Activated CD4-positive, alpha-beta memory T cell treated with anti-CD3 and anti-CD28 coated beads, Interleukin-2, amount 10 ng/mL, durations not matched to agents 7 days and 5 days (primary cell): ENCODE measurements at regions of chr7 and their contacts with region 1.

Region 1: DNA sequence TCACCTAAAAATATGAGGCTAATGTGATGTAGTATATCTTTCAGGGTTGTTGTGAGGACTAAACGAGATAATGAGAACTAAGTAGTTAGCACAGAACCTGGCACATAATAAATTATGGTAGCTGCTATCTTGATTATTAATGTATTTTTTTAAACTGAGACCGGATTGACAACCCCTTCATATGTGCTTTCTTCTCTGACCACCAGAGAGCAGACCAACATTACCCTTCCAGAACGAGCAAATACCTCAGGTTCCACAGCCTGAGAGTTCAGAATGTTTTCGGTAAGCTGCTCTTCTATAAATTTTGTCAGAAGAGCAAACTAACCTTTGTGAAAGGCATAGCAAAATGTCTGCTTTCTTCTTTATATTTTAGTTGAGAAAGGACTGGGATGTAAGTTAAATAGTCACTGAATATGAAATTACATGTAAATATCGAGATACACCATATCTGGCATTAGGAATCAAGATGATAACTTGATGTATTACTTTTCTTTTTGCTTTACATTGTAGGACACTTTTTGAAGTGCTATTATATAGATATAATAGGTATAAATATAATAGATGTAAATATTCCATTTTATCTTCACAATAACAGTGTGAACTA is 13.6 kb upstream of the BPGM start:
- DNase-seq: peak; percentile 31
- H3K4me3 Mint-ChIP-seq: no peak overlapping the region
- H3K27ac Mint-ChIP-seq: no peak overlapping the region
- H3K4me1 Mint-ChIP-seq: peaks cover 34% of the 10 kb centered on the region
- H3K27me3 Mint-ChIP-seq: peaks cover 15% of the 10 kb centered on the region

Region 2: GRCh38 chr7:134619627-134620331 is 13.3 kb before region 1 on chr7:
- CTCF ChIA-PET with region 1: no interaction called
- POLR2A ChIA-PET with region 1: no interaction called
- DNase-seq: no peak
- H3K4me3 Mint-ChIP-seq: no peak overlapping the region
- H3K27ac Mint-ChIP-seq: no peak overlapping the region
- H3K4me1 Mint-ChIP-seq: peaks cover 2% of the 10 kb centered on the region
- H3K27me3 Mint-ChIP-seq: peaks cover 52% of the 10 kb centered on the region

Region 3: GRCh38 chr7:134690016-134690415 is 57.0 kb after region 1 on chr7:
- CTCF ChIA-PET with region 1: interaction called, 23 read pairs
- POLR2A ChIA-PET with region 1: interaction called, 3 read pairs
- DNase-seq: no peak
- H3K4me3 Mint-ChIP-seq: no peak overlapping the region
- H3K27ac Mint-ChIP-seq: no peak overlapping the region
- H3K4me1 Mint-ChIP-seq: peaks cover 30% of the 10 kb centered on the region
- H3K27me3 Mint-ChIP-seq: peaks cover 3% of the 10 kb centered on the region

Region 4: GRCh38 chr7:134701272-134701671 is 68.2 kb after region 1 on chr7:
- CTCF ChIA-PET with region 1: interaction called, 48 read pairs
- POLR2A ChIA-PET with region 1: interaction called, 3 read pairs
- DNase-seq: no peak
- H3K4me3 Mint-ChIP-seq: no peak overlapping the region
- H3K27ac Mint-ChIP-seq: no peak overlapping the region
- H3K4me1 Mint-ChIP-seq: no peaks in the 10 kb centered on the region
- H3K27me3 Mint-ChIP-seq: no peaks in the 10 kb centered on the region

Region 5: DNA sequence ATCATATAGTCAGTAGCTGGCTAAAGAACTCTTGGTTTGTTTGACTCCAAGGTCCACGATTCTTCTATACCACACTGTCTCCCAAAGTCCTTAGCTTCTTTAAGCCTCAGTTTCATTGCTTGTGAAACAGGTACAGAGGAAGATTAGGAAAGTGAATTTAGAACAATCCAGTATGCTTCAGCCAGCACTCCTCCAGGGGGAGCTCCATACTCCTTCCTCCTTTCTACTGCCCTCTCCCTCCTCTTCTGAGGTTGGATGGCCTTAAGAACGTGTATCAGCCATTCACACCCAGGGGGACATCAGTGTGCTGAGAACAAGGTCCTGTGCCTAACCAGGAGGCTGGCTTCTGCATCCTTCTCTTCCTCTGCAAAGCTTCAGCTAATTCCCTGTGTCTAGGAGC is 91.6 kb after region 1 on chr7:
- CTCF ChIA-PET with region 1: interaction called, 11 read pairs
- POLR2A ChIA-PET with region 1: no interaction called
- DNase-seq: no peak
- H3K4me3 Mint-ChIP-seq: no peak overlapping the region
- H3K27ac Mint-ChIP-seq: no peak overlapping the region
- H3K4me1 Mint-ChIP-seq: no peaks in the 10 kb centered on the region
- H3K27me3 Mint-ChIP-seq: no peaks in the 10 kb centered on the region

Region 6: DNA sequence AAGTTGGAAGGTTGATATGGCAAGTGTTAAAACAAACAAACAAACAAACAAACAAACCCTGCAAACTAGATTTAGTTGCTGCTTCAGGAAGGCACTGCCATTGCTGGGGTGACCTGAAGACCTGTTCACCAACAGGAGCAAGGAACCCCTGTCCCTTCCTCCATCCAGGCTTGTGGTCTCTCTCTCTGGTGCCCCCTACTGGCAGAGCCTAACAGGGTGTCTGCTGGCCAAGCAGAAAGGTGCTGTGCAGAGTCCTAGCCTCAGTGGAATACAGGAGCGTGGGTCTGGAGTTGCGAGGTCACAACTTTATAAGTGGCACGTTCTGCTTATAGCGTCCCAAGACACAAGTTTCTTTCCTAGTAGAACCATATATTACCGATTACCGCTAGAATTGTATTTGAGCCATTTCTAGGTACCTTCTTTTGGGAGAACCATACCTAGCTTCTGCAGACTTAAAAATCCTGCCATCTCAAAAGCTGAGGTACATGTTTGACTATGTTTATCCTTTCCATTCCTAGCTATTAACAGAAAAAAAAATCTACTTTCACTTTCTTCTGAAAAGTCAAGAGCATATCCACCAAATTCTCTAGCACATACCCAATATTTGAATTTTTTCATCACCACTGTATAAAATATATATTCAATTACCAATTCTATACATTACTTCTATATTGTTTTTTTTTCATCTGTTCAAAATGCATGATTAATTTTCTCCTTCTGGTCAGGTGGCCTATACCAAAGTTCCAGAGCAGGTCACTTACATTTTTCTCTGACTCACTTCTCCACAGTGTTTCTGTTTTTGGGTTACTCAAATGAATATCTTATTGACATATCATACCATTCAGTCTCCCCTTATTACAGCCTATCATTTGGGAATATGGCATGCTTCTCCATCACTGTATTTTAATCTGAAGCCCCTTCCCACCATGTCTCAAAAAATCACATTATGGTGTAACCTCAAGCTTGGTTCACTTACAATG is 117.3 kb after region 1 on chr7:
- CTCF ChIA-PET with region 1: interaction called, 32 read pairs
- POLR2A ChIA-PET with region 1: interaction called, 4 read pairs
- DNase-seq: peak; percentile 66
- H3K4me3 Mint-ChIP-seq: no peak overlapping the region
- H3K27ac Mint-ChIP-seq: no peak overlapping the region
- H3K4me1 Mint-ChIP-seq: peaks cover 8% of the 10 kb centered on the region
- H3K27me3 Mint-ChIP-seq: no peaks in the 10 kb centered on the region

Region 7: DNA sequence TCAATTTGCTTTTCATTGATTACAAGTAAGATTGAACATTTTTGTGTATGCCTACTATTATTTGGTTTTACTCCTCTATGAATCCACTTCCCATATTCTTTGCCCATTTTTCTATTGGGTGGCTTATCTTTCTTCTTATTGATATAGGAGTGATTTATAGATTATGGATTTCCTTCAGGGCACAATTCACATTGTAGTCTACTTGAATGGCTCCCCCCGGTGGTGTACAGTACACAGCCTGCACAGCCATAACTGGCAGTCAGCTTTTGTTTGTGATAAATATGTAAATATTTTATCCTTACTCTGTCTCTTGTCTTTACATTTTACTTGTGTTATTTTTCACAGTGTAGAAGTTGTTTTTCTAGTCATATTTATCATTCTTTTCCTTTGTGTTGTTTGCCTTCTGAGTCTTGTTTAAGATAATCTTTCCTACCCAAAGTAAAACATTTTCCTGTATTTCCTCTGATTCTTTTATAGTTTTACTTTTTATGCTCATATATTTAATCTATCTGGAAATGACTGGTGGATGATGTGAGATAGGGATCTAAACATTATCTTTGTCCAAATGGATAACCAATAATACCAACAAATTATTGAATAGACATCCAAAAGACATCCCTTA is 122.5 kb after region 1 on chr7:
- CTCF ChIA-PET with region 1: interaction called, 32 read pairs
- POLR2A ChIA-PET with region 1: no interaction called
- DNase-seq: peak; percentile 50
- H3K4me3 Mint-ChIP-seq: no peak overlapping the region
- H3K27ac Mint-ChIP-seq: no peak overlapping the region
- H3K4me1 Mint-ChIP-seq: peaks cover 7% of the 10 kb centered on the region
- H3K27me3 Mint-ChIP-seq: peaks cover 2% of the 10 kb centered on the region

Region 8: GRCh38 chr7:134986363-134987251 is 353.6 kb after region 1 on chr7 and contains the start of gene AGBL3:
- CTCF ChIA-PET with region 1: interaction called, 10 read pairs
- POLR2A ChIA-PET with region 1: no interaction called
- DNase-seq: peak; percentile 94
- H3K4me3 Mint-ChIP-seq: peak within 1 kb of the TSS; percentile 98
- H3K27ac Mint-ChIP-seq: peak within 1 kb of the TSS; percentile 90
- H3K4me1 Mint-ChIP-seq: peaks cover 34% of the 10 kb centered on the region
- H3K27me3 Mint-ChIP-seq: no peaks in the 10 kb centered on the region
- total RNA-seq, gene AGBL3: 2.8 to 3.4 TPM